Activated B cell treated with CpG ODN at 0.5 μM for 24 hours (primary cell): ENCODE measurements at regions of chrX and their contacts with region 1.

Region 1: GRCh38 chrX:48597353-48598264 is at the start of gene WDR13:
- DNase-seq: peak; percentile 79
- ATAC-seq: peak; percentile 83
- H3K4me3 Mint-ChIP-seq: peak within 1 kb of the TSS; percentile 97
- H3K27ac Mint-ChIP-seq: peak within 1 kb of the TSS; percentile 99
- H3K4me1 Mint-ChIP-seq: peaks cover 7% of the 10 kb centered on the region
- H3K27me3 Mint-ChIP-seq: no peaks in the 10 kb centered on the region
- CTCF ChIP-seq: no peak
- total RNA-seq, gene WDR13: 73.4 and 75.8 TPM in 2 replicates

Region 2: DNA sequence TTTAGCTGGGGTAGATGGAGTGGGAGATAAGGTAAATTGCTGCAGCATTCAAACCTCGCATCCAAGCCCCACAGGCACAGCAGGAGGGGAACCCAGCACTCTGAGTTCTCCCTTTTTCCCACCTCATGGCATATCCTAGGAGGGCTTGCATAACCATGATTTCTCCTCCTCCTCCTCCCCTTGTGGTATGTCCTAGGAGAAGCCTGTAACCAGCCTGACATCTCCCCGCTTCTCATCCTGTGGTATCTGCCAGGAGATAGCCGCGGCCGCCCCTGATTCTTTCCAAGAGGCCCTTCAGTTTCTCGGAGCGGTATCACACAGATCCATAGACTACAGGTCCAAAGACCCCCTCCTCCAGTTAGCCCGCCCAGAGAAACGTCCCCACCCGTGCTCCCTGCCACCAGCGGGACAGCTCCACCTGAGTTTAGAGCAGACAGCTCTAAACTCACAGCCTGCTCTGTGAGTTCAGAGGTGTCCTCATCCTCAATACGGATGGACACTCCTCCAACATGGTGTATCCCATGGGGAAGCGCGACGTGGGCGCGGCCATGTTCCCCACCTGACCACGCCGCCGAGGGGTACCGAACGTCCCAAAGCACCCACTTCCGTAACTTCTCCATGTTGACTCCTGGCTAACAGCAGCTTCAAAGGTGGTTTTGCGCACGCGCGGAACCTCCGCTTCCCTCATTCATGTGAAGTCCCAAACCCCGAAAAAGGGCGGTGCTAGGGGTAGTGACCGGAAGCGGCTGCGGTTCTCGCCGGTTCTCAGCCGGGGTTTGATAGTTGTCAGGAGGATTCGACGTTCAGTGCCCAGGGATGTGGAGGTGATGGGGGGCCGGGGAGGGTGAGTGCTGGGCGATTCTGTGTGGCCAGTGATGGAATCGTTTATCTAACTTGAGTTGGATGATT is 761.2 kb before region 1 on chrX and contains the start of gene ZNF81:
- CTCF ChIA-PET with region 1: no interaction called
- POLR2A ChIA-PET with region 1: no interaction called
- intact Hi-C with region 1: loop called (anchors 2 kb)
- DNase-seq: peak; percentile 76
- ATAC-seq: peak; percentile 95
- H3K4me3 Mint-ChIP-seq: peak within 1 kb of the TSS; percentile 93
- H3K27ac Mint-ChIP-seq: peak within 1 kb of the TSS; percentile 93
- H3K4me1 Mint-ChIP-seq: peaks cover 21% of the 10 kb centered on the region
- H3K27me3 Mint-ChIP-seq: no peaks in the 10 kb centered on the region
- CTCF ChIP-seq: no peak
- total RNA-seq, gene ZNF81: 11.0 and 15.3 TPM in 2 replicates

Region 3: GRCh38 chrX:48071064-48071985 is 526.3 kb before region 1 on chrX and contains the start of gene ZNF630:
- CTCF ChIA-PET with region 1: no interaction called
- POLR2A ChIA-PET with region 1: no interaction called
- intact Hi-C with region 1: no loop called
- DNase-seq: no peak
- ATAC-seq: no peak
- H3K4me3 Mint-ChIP-seq: no peak within 1 kb of the TSS
- H3K27ac Mint-ChIP-seq: no peak within 1 kb of the TSS
- H3K4me1 Mint-ChIP-seq: no peaks in the 10 kb centered on the region
- H3K27me3 Mint-ChIP-seq: no peaks in the 10 kb centered on the region
- CTCF ChIP-seq: no peak
- total RNA-seq, gene ZNF630: not detected in 2 replicates

Region 4: DNA sequence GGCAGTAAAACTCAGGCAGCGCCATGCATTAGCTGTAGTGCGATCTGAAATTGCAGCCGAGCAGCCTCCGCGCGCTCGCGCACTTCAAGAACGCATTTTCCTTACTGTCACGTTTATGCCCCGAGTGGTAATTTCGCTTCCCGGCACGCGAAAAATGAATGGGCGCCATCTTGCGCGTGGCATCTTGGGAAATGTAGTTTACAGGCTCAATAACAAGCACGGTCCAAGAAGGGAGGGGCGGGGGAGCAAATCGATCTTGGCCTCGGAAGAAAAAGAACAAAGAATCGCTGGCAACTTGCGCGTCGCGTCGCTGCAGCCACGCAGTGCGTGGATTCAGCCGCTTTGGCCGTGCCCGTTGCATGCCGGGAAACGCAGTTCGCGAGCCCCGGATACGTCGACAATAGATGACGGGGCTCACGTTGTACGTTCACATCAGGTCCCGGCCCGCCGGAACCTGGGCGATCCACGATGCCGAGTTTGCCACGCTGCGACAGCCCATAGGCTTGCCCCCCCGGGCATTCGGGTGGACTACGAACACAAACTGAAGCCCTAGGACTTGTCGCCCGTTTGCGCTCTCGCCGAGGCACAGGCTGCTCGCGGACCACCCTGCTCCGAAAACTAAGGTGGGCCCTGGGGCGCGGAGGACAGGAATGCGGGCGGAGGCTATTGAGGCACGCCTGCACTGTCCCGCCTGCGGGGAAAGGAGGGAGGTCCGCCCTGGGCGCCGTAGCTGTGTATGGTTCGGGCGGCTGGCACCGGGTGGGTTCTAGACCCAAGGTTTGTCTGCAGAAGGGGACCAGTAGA is 121.6 kb before region 1 on chrX and contains the start of gene FTSJ1:
- CTCF ChIA-PET with region 1: no interaction called
- POLR2A ChIA-PET with region 1: no interaction called
- intact Hi-C with region 1: loop called (anchors 1 kb)
- DNase-seq: peak; percentile 70
- ATAC-seq: peak; percentile 87
- H3K4me3 Mint-ChIP-seq: peak within 1 kb of the TSS; percentile 89
- H3K27ac Mint-ChIP-seq: peak within 1 kb of the TSS; percentile 93
- H3K4me1 Mint-ChIP-seq: peaks cover 23% of the 10 kb centered on the region
- H3K27me3 Mint-ChIP-seq: no peaks in the 10 kb centered on the region
- CTCF ChIP-seq: no peak
- total RNA-seq, gene FTSJ1: 39.9 and 44.5 TPM in 2 replicates

Region 5: GRCh38 chrX:48508400-48509244 is 89.0 kb before region 1 on chrX and contains the start of gene PORCN:
- CTCF ChIA-PET with region 1: no interaction called
- POLR2A ChIA-PET with region 1: no interaction called
- intact Hi-C with region 1: loop called (anchors 1 kb)
- DNase-seq: peak; percentile 65
- ATAC-seq: peak; percentile 88
- H3K4me3 Mint-ChIP-seq: peak within 1 kb of the TSS; percentile 91
- H3K27ac Mint-ChIP-seq: peak within 1 kb of the TSS; percentile 91
- H3K4me1 Mint-ChIP-seq: peaks cover 11% of the 10 kb centered on the region
- H3K27me3 Mint-ChIP-seq: no peaks in the 10 kb centered on the region
- CTCF ChIP-seq: no peak
- total RNA-seq, gene PORCN: 7.8 and 9.8 TPM in 2 replicates

Region 6: GRCh38 chrX:48539345-48540027 is 58.1 kb before region 1 on chrX and contains the start of gene TBC1D25:
- CTCF ChIA-PET with region 1: no interaction called
- POLR2A ChIA-PET with region 1: interaction called, 3 read pairs
- intact Hi-C with region 1: loop called (anchors 1 kb)
- DNase-seq: peak; percentile 84
- ATAC-seq: peak; percentile 78
- H3K4me3 Mint-ChIP-seq: peak within 1 kb of the TSS; percentile 92
- H3K27ac Mint-ChIP-seq: peak within 1 kb of the TSS; percentile 95
- H3K4me1 Mint-ChIP-seq: peaks cover 20% of the 10 kb centered on the region
- H3K27me3 Mint-ChIP-seq: no peaks in the 10 kb centered on the region
- CTCF ChIP-seq: no peak
- total RNA-seq, gene TBC1D25: 16.4 and 19.4 TPM in 2 replicates

Region 7: GRCh38 chrX:48616576-48616975 is 19.0 kb after region 1 on chrX:
- CTCF ChIA-PET with region 1: no interaction called
- POLR2A ChIA-PET with region 1: no interaction called
- intact Hi-C with region 1: no loop called
- DNase-seq: no peak
- ATAC-seq: no peak
- H3K4me3 Mint-ChIP-seq: no peak overlapping the region
- H3K27ac Mint-ChIP-seq: no peak overlapping the region
- H3K4me1 Mint-ChIP-seq: no peaks in the 10 kb centered on the region
- H3K27me3 Mint-ChIP-seq: peaks cover 4% of the 10 kb centered on the region
- CTCF ChIP-seq: no peak

Region 8: DNA sequence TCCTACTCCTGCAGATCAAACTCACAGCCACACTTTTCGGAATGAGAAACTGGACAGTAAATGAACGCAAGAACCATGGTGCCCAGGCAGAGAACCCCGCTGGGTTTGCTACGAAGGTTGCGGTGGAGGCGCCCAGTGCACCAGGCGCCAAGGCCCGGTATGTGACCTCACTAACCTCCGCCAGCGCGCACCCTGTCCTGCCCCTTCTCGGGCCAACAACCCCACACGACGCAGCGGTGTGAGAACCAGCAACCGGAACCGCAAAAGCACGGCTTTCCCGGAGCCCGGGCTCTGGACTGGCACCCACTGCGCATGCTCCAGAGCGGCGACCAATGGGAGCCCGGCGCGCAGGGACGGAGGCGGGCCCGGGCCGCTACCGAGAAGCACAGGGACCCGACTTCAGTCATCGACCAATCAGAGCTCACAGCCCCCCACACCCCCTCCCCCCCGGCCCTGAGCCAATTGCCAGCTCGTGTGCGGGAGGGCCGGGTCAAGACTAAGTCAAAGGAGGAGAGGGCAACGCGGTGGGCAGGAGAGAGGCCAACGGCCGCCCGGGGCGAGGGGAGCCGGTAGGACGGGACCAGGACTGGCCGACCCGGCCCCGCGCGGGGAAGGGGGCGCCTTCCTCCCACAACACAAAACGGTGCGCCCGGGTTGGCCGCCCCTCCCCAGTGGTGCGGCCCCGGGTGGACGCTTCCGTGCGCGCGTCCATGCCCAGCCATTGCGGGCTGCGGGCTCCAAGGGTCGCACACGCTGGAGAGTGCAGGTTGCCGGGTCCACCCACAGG is 78.7 kb after region 1 on chrX:
- CTCF ChIA-PET with region 1: no interaction called
- POLR2A ChIA-PET with region 1: interaction called, 3 read pairs
- intact Hi-C with region 1: loop called (anchors 5 kb)
- DNase-seq: peak; percentile 79
- ATAC-seq: peak; percentile 94
- H3K4me3 Mint-ChIP-seq: peak overlapping the region; percentile 89
- H3K27ac Mint-ChIP-seq: peak overlapping the region; percentile 88
- H3K4me1 Mint-ChIP-seq: peaks cover 22% of the 10 kb centered on the region
- H3K27me3 Mint-ChIP-seq: no peaks in the 10 kb centered on the region
- CTCF ChIP-seq: no peak

Region 9: DNA sequence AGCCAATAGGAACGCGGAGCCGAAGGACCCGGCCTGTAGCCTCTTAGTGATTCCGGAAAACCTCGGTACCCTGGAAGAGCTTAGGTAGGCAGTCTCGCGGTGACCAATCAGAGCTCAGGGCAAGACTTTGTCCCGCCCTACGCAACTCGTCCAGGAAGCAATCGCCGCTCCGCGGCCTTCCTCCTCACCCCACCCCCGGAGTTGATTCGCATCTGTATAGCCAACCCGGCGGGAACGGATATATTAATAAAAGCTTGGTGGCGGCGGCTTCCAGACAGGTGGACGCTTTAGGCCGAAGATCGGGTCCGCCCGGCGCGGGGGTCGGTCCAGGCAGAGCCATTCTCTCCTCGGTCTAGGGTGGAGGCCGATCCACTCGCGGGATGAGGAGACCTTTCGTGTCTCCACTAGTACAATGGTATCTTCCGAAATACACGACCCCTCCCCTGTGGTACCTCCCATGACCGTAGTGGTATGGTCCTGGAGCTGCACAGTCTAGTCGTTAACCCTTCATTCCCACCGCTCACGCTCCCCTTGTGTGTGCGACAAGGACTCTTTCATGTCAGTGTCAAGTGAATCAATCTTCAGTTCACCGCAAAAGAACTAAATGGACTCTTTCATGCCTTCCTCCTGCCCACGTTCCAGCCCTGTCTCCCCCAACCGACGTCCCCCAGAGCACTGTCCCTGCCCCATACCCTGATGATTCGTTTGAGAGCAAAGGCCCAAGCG is 139.8 kb after region 1 on chrX:
- CTCF ChIA-PET with region 1: no interaction called
- POLR2A ChIA-PET with region 1: no interaction called
- intact Hi-C with region 1: loop called (anchors 1 kb)
- DNase-seq: peak; percentile 65
- ATAC-seq: peak; percentile 97
- H3K4me3 Mint-ChIP-seq: peak overlapping the region; percentile 91
- H3K27ac Mint-ChIP-seq: peak overlapping the region; percentile 94
- H3K4me1 Mint-ChIP-seq: peaks cover 15% of the 10 kb centered on the region
- H3K27me3 Mint-ChIP-seq: no peaks in the 10 kb centered on the region
- CTCF ChIP-seq: no peak